CD14-positive monocyte (primary cell): ENCODE measurements at regions of chrX and their contacts with region 1.

Region 1: GRCh38 chrX:19334945-19335626 is 8.6 kb upstream of the PDHA1 start:
- DNase-seq: peak; percentile 23 to 50 (median 44)
- H3K4me3 ChIP-seq: no peak overlapping the region
- H3K4me3 Mint-ChIP-seq: no peak overlapping the region
- H3K27ac ChIP-seq: no peak overlapping the region
- H3K27ac Mint-ChIP-seq: no peak overlapping the region
- H3K4me1 ChIP-seq: no peaks in the 10 kb centered on the region
- H3K4me1 Mint-ChIP-seq: no peaks in the 10 kb centered on the region
- H3K27me3 ChIP-seq: no peaks in the 10 kb centered on the region
- H3K27me3 Mint-ChIP-seq: peaks cover 0 to 4% (median 2%) of the 10 kb centered on the region in 3 donors
- CTCF ChIP-seq: peak; percentile 26

Region 2: DNA sequence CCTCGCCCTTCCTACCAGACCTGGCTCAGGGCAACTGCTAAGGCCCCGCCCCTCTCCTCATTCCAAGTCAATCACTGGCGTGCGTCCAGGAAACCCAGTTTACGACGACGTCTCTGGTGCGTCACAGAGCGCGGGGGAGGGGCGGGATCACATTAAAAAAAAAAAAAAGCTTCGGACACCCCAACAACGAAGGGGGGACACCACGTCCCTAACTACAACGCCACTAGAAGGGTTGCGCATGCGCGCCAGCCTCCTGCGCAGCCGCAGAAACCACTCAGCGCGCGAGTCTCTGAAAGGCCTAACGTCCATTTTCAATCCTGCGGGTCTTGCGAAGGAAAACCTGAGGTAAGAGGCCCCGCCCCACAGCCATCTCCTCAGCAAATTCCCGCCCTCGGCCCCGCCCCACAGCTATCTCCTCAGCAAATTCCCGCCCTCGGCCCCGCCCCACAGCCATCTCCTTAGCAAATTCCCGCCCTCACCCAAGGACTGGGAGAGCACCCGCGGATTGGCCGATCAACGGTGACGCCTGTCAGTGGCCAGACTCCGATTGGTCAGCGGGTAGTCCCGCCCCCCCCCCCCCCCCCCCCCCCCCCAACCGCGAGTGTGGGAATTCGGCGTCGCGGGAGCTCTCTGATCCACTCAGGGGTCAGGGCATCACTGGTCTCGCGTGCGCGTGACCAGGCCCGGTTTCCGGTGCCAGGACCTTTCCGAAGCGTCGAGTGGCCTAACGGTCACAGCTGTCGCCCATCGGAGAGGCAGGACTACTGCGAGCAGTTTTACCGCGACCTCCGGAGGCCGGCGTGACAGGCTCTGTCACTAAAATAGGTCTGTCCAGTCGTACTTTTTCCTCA is 1598.0 kb before region 1 on chrX and contains the start of gene SCML1:
- intact Hi-C with region 1: loop called in 1 of 2 experiments (anchors 10 kb)
- DNase-seq: peak; percentile 89 to 96 (median 92)
- H3K4me3 ChIP-seq: peak within 1 kb of the TSS; percentile 38 to 74 (median 57)
- H3K4me3 Mint-ChIP-seq: peak within 1 kb of the TSS; percentile 83 to 96
- H3K27ac ChIP-seq: peak within 1 kb of the TSS; percentile 64 to 65
- H3K27ac Mint-ChIP-seq: peak within 1 kb of the TSS; percentile 43 to 87 (median 85)
- H3K4me1 ChIP-seq: peaks cover 13 to 16% of the 10 kb centered on the region in 2 donors
- H3K4me1 Mint-ChIP-seq: peaks cover 17% of the 10 kb centered on the region
- H3K27me3 ChIP-seq: peaks cover 13 to 32% of the 10 kb centered on the region in 2 donors
- H3K27me3 Mint-ChIP-seq: peaks cover 24 to 41% (median 31%) of the 10 kb centered on the region in 3 donors
- CTCF ChIP-seq: no peak
- polyA plus RNA-seq, gene SCML1: 0.56 to 8.5 (median 1.4) TPM

Region 3: DNA sequence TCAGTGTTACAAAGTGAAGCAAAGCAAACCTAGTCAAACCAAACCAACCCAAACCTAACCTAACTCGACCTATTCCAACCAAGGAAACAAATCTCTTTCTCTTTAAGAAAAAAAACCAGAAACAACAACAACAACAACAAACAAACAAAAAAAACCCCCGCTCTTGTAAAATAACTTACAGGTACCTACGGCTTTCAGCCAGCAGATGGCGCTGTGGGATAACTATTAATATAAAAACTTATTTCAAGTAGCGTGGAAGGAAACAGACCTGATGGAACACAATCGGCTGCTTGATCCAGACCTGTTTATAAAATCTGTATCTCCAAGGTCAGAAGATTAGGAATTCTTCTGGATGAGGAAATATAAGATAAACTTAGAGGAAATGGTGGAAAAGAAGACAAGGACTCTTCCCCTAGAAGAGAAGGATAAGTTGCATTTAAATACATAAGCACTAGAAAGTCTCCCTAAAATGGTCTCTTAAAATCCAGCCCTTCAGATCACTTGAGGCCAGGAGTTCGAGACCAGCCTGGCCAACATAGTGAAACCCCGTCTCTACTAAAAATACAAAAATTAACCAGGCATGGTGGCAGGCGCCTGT is 944.0 kb before region 1 on chrX:
- intact Hi-C with region 1: loop called (anchors 5 kb)
- DNase-seq: peak; percentile 47 to 59 (median 51)
- H3K4me3 ChIP-seq: no peak overlapping the region
- H3K4me3 Mint-ChIP-seq: peak overlapping the region in 1 of 2 donors; percentile 51
- H3K27ac ChIP-seq: no peak overlapping the region
- H3K27ac Mint-ChIP-seq: peak overlapping the region in 1 of 7 donors; percentile 63
- H3K4me1 ChIP-seq: no peaks in the 10 kb centered on the region
- H3K4me1 Mint-ChIP-seq: no peaks in the 10 kb centered on the region
- H3K27me3 ChIP-seq: no peaks in the 10 kb centered on the region
- H3K27me3 Mint-ChIP-seq: peaks cover 0 to 2% (median 0%) of the 10 kb centered on the region in 3 donors
- CTCF ChIP-seq: peak; percentile 61

Region 4: DNA sequence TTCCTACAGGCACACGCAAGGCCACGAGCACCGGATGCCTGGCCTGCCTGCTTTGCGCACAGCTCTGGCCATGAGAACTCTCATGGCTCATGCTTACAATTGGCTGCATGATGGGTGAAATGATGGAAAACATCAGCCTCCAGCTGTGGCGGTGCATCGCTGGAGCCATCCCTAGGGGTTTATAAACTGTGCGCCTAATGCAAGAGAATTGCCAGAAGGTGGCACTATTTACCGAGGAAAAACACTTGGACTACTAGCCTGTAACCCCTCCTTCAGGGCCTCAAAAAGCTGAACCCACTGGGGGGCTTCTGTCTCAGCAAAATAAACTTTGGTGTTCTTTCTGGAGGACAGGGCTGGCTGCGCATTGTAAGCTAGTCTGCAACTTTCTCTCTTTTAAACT is 403.1 kb before region 1 on chrX:
- intact Hi-C with region 1: loop called (anchors 5 to 10 kb)
- DNase-seq: peak in 2 of 3 donors; percentile 12 to 29
- H3K4me3 ChIP-seq: no peak overlapping the region
- H3K4me3 Mint-ChIP-seq: no peak overlapping the region
- H3K27ac ChIP-seq: no peak overlapping the region
- H3K27ac Mint-ChIP-seq: no peak overlapping the region
- H3K4me1 ChIP-seq: no peaks in the 10 kb centered on the region
- H3K4me1 Mint-ChIP-seq: no peaks in the 10 kb centered on the region
- H3K27me3 ChIP-seq: no peaks in the 10 kb centered on the region
- H3K27me3 Mint-ChIP-seq: peaks cover 0 to 2% (median 0%) of the 10 kb centered on the region in 3 donors
- CTCF ChIP-seq: peak; percentile 53

Region 5: GRCh38 chrX:19303256-19303880 is 31.7 kb before region 1 on chrX:
- intact Hi-C with region 1: no loop called
- DNase-seq: no peak
- H3K4me3 ChIP-seq: no peak overlapping the region
- H3K4me3 Mint-ChIP-seq: no peak overlapping the region
- H3K27ac ChIP-seq: no peak overlapping the region
- H3K27ac Mint-ChIP-seq: no peak overlapping the region
- H3K4me1 ChIP-seq: no peaks in the 10 kb centered on the region
- H3K4me1 Mint-ChIP-seq: no peaks in the 10 kb centered on the region
- H3K27me3 ChIP-seq: no peaks in the 10 kb centered on the region
- H3K27me3 Mint-ChIP-seq: peaks cover 4 to 9% (median 4%) of the 10 kb centered on the region in 3 donors
- CTCF ChIP-seq: no peak

Region 6: GRCh38 chrX:19410259-19410658 is 75.2 kb after region 1 on chrX:
- intact Hi-C with region 1: no loop called
- DNase-seq: no peak
- H3K4me3 ChIP-seq: no peak overlapping the region
- H3K4me3 Mint-ChIP-seq: no peak overlapping the region
- H3K27ac ChIP-seq: no peak overlapping the region
- H3K27ac Mint-ChIP-seq: no peak overlapping the region
- H3K4me1 ChIP-seq: no peaks in the 10 kb centered on the region
- H3K4me1 Mint-ChIP-seq: no peaks in the 10 kb centered on the region
- H3K27me3 ChIP-seq: no peaks in the 10 kb centered on the region
- H3K27me3 Mint-ChIP-seq: peaks cover 0 to 4% (median 3%) of the 10 kb centered on the region in 3 donors
- CTCF ChIP-seq: no peak